IMR-90 (cell line): ENCODE measurements at regions of chr4 and their contacts with region 1.

Region 1: GRCh38 chr4:176195184-176195978 is at the start of gene SPATA4:
- DNase-seq: peak; percentile 89
- ATAC-seq: peak; percentile 97
- H3K4me3 ChIP-seq: peak within 1 kb of the TSS; percentile 58
- H3K27ac ChIP-seq: peak within 1 kb of the TSS; percentile 88
- H3K4me1 ChIP-seq: peaks cover 7% of the 10 kb centered on the region
- H3K27me3 ChIP-seq: no peaks in the 10 kb centered on the region
- CTCF ChIP-seq: no peak
- POLR2A ChIP-seq: peak; percentile 81
- RAD21 ChIP-seq: no peak
- total RNA-seq, gene SPATA4: under 0.01 and 0.28 TPM in 2 replicates

Region 2: DNA sequence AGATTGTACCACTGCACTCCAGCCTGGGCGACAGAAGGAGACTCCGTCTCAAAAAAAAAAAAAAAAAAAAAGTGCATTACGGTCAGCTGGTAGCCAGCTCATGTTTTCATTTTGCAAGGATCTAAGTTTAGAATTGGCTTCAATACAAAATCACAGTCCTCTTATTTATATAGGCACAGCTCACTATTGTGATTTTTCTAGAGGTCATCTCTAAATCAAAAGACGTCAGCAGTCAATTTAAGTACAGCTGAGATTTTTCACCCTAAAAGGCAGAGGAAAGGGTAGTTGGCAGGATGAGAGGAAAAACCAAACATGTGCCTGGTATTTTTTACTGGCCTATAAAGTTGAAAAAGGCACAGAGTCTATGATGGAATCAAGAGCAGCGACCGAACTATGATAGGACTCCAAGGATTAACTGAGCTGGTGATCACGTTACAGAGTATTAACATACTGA is 42.8 kb after region 1 on chr4:
- CTCF ChIA-PET with region 1: interaction called, 4 read pairs
- POLR2A ChIA-PET with region 1: interaction called, 6 read pairs
- dilution Hi-C with region 1: no loop called
- in situ Hi-C with region 1: no loop called
- intact Hi-C with region 1: loop called (anchors 5 kb)
- DNase-seq: peak; percentile 87
- ATAC-seq: peak; percentile 76
- H3K4me3 ChIP-seq: no peak overlapping the region
- H3K27ac ChIP-seq: peak overlapping the region; percentile 62; the same call in 1 of the 2 replicates
- H3K4me1 ChIP-seq: peaks cover 11% of the 10 kb centered on the region; the same call in 1 of the 2 replicates
- H3K27me3 ChIP-seq: no peaks in the 10 kb centered on the region
- CTCF ChIP-seq: no peak
- POLR2A ChIP-seq: no peak
- RAD21 ChIP-seq: no peak

Region 3: GRCh38 chr4:176270669-176271068 is 75.3 kb after region 1 on chr4:
- CTCF ChIA-PET with region 1: no interaction called
- POLR2A ChIA-PET with region 1: no interaction called
- dilution Hi-C with region 1: no loop called
- in situ Hi-C with region 1: loop called (anchors 10 kb)
- intact Hi-C with region 1: loop called (anchors 1 kb)
- DNase-seq: peak; percentile 100
- ATAC-seq: peak; percentile 98
- H3K4me3 ChIP-seq: no peak overlapping the region
- H3K27ac ChIP-seq: peak overlapping the region; percentile 61; the same call in 1 of the 2 replicates
- H3K4me1 ChIP-seq: peaks cover 6% of the 10 kb centered on the region
- H3K27me3 ChIP-seq: no peaks in the 10 kb centered on the region
- CTCF ChIP-seq: no peak
- POLR2A ChIP-seq: 0 out of 2 replicates have a peak, but pooled peaks have one; percentile 19
- RAD21 ChIP-seq: peak; percentile 13; the same call in 1 of the 2 replicates

Region 4: DNA sequence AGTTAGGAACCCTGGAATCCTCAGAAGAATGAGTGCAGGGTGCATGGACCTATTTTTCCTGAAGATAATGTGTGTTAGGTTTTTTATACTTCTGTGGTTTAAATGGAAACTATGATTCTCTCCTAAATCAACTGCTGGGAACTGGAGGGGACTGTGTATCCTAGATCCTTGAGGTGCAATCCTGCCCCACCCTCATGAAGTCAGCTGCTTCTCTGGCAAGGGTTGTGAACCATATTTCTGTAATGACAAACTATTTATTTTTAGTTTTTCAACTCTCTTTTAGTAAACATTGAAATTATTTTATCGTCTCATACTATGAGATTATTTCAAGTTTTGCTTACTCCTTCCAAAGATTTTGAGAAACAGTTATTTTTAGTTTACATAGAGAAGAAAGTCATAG is 623.1 kb after region 1 on chr4:
- CTCF ChIA-PET with region 1: no interaction called
- POLR2A ChIA-PET with region 1: no interaction called
- dilution Hi-C with region 1: no loop called
- in situ Hi-C with region 1: no loop called
- intact Hi-C with region 1: no loop called
- DNase-seq: peak; percentile 22
- ATAC-seq: peak; percentile 21; the same call in 1 of the 2 replicates
- H3K4me3 ChIP-seq: no peak overlapping the region
- H3K27ac ChIP-seq: no peak overlapping the region
- H3K4me1 ChIP-seq: no peaks in the 10 kb centered on the region; the same call in 1 of the 2 replicates
- H3K27me3 ChIP-seq: no peaks in the 10 kb centered on the region
- CTCF ChIP-seq: no peak
- POLR2A ChIP-seq: no peak
- RAD21 ChIP-seq: no peak